Right ventricle myocardium inferior (tissue), 1 donor: ENCODE measurements at regions of chr14 and their contacts with region 1.

Region 1: DNA sequence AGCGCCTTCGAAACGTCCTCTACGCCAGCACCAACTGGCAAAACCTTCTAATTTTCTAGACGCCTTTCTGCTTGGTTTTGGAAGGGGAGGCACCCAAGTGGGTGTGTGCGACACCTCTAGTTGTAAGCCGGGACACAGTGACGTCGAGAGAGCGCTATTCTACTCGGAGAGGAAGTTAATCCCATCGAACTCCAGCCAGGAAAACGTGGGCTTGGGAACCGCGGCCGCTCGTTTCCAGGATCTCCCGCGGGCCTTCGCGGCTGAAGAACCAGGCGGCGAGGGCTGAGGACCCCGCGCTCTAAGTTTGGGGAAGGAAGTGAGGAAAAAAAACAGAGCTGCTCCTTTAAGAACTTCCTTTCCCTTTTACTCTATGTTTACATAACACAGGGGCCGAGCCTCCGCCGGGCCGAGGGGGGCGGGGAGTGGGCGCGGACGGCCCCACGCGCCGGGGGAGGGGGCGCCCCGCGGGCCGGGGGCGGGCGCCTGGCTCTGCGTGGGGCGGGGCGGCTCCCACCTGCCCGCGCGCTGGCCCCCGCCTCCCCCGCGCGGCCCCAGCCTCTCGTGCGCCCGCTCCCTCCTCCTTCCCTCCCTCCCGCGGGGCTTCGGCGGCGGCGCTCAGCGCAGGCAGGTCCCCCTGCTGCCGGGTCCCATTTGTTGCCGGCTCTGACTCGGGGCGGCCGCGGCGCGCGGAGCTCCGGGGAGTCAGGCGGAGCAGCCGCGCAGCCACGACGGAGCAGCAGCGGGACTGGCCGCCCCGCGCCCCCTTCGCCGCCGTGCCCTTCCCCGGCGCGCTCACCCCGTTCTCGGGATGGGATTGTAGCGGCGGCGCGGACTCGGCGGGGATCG is at the start of gene PELI2:
- DNase-seq: peak; percentile 93
- ATAC-seq: peak; percentile 91
- total RNA-seq, gene PELI2: 3.2 TPM

Region 2: DNA sequence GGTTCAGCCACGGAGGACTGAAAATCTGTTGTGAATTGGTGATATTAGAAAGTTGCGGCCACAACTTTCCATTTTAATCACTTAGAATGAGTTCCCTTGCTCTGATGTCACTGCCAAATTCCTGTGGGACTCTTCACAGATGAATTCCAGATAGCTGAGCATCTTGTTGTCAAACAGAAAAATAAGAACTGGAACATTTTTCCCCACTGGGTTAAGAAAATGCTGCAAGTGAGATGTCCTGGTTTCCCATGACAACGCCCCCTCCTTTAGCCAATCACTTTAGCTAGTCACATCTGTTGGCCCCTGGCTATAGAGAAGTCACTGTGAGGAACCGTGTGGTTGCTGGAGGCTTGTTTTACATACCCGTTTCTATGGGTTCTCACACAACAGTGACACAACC is 402.1 kb before region 1 on chr14:
- intact Hi-C with region 1: loop called (anchors 10 kb)
- DNase-seq: no peak
- ATAC-seq: peak; percentile 86

Region 3: GRCh38 chr14:55850825-55851241 is 267.2 kb before region 1 on chr14:
- intact Hi-C with region 1: loop called (anchors 10 kb)
- DNase-seq: no peak
- ATAC-seq: no peak

Region 4: DNA sequence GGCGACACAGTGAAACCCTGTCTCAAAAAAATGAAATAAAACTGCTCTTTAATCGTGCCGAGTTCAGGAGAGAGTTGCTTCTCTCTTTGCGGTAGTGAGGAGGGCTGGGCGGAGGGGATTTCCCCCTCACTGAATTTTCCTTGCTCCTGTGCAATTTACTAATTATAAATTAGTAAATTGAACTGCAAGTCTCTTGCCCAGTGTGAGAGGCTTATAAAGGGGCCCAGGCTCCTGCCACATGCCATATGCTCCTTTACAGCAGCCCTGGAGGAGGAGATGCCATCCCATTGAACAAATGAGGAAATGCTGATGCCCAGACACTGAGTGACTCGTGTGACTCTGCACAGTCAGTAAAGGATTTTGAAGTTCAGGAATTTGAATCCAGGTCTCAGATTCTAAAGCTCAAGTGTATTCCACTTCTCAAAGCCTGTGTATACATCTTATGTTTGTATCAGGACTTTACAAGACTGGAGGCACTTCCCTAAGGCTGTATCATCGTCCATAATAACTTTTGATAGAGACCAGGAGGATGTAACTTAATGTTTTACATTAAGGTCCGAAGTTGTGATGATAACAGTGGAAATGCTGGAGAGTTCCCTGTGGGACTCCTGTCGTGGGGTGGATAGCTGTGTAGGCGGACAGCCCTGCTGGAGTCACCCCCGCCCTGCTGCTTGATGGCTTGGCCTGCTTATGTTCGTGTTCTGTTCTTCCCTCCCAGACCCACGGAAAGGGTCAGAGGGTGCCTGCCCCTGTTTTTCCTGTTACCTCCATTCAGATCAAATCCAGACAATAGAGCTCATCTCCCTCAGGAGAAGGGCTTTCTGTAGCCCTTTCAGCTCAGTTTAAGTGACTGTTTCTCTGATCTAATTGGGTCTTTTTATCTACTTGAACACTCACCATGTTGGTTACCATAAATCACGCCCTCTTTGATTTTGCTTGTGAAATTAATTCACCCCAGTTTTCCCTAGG is 14.2 kb after region 1 on chr14:
- intact Hi-C with region 1: no loop called
- DNase-seq: peak; percentile 59
- ATAC-seq: peak; percentile 45

Region 5: DNA sequence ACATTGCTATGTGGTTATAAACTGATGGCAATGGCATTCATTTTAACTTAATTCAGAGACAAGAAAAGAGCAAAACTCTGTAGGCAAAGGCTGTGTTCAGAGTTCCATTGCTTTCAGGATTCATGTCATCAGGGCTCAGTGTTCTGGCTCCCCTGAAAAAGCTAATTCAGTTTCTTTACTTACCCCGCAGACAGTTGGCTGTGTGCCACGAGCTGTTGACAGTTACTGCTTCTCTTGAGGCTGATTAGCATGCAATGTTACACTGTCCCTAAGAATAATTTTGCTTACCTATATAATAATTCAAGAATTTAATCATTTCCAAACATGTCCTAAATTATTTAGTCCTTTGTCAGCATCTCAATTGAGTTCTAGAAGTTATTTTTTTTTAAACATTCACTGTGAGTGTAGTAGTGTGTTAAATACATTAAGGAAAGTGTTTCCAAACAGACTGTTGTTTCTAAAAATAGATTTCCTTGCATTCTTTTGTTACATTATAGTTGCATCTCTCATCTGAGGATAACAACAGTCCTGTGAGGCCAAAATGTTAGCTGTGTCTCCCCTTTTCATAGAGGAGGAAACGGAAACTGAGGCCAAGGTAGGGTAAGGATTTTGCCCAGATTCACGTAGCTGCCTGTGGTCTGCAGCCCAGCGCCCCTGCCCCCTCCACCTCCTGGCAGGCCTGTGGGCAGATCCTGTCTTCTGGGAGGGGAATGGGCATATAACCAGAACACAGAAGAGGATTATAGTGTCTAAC is 98.8 kb after region 1 on chr14:
- intact Hi-C with region 1: loop called (anchors 5 kb)
- DNase-seq: peak; percentile 86
- ATAC-seq: no peak

Region 6: DNA sequence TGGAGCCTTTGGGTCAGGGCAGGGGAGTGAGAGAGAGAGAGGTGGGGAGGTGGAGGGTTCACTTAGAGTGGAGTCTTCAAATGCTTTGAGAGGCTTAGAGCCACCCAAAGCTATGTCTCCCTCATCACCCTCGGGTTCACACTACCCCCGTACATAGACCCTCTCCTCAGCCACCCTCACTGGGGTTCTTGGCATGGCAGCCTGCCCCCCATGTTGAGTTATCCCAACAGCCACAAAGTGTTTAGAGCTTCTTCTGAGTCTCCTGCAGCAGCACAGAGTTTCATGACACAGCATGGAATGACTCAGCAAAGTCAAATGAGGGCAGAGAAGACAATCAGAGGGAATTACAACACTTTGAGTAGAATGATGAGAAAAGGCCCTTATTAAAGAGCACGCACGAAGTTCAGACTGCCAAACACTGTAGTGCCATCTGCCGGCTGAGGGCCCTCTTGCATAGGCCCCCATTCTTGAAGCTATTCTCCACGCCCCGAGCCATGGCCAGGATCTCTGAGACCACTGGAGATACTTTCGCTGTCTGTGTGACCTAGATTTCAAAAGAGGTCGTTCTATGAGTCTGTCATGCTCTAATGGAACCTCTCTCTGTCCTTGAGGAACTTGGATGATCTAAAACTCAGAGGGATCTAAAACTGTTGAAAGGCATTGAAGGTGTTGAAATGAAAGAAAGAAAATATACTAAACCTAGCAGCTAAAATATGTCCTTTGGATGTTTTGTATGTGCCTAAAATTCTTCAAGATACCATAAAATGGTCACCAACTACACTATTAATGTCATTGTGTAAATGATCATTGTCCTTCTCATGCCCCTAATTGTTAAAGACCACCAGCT is 222.1 kb after region 1 on chr14:
- intact Hi-C with region 1: loop called (anchors 5 kb)
- DNase-seq: peak; percentile 88
- ATAC-seq: peak; percentile 95

Region 7: DNA sequence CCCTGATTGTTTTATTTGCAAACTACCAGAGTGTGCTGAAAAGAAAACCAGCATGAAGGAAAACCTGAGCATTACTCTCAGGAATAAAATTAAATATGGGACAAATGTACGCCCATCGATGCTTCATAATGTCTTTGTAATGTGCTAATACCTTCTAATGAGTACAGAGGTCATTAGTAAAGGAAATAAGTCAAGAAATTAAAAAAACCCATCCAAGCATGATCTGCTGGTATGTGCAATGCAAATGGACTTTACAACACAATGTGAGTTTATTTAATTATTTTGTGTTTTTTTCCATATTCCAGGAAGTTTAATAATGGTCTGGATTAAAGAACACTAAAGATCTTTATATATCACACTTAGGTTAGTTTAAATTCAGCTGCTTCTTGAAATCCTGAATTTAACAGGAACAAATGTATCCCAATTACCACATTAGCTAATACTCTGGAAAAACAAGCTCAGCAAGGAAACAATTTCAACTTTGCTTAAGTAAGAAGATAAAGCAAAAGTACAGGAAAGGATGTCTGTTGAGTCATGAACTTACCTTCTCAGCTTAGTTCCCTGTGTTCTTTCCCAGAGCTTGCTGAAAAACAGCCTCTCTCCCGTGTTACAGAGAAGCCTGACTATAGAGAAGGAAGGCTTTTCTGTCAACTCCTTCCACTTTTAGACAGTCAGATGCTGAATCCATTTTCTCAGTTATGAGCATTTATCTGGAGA is 282.3 kb after region 1 on chr14:
- intact Hi-C with region 1: no loop called
- DNase-seq: no peak
- ATAC-seq: no peak